Ovary (tissue), 10 donors: ENCODE measurements at regions of chr1 and their contacts with region 1.

Region 1: DNA sequence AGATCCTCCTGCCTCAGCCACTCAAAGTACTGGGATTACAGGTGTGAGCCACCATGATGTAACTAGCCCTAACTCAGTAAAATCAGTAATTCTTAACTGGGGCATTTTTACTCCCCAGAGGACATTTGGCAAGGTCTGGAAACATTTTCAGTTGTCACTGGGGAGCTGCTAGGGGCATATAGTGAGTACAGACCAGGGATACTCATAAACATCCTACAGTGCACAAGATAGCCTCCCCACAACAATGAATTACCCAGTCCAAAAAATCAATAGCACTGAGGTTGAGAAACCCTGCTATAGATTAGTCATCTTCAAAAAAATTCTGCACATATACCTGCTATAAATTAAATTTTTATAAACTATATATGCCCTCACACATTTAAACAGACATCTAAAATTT is 13.0 kb downstream of the TM2D1 start:
- DNase-seq: no peak
- H3K4me3 ChIP-seq: no peak overlapping the region
- H3K27ac ChIP-seq: no peak overlapping the region
- H3K4me1 ChIP-seq: no peaks in the 10 kb centered on the region
- H3K27me3 ChIP-seq: no peaks in the 10 kb centered on the region
- CTCF ChIP-seq: no peak
- EP300 ChIP-seq: no peak
- POLR2A ChIP-seq: no peak

Region 2: DNA sequence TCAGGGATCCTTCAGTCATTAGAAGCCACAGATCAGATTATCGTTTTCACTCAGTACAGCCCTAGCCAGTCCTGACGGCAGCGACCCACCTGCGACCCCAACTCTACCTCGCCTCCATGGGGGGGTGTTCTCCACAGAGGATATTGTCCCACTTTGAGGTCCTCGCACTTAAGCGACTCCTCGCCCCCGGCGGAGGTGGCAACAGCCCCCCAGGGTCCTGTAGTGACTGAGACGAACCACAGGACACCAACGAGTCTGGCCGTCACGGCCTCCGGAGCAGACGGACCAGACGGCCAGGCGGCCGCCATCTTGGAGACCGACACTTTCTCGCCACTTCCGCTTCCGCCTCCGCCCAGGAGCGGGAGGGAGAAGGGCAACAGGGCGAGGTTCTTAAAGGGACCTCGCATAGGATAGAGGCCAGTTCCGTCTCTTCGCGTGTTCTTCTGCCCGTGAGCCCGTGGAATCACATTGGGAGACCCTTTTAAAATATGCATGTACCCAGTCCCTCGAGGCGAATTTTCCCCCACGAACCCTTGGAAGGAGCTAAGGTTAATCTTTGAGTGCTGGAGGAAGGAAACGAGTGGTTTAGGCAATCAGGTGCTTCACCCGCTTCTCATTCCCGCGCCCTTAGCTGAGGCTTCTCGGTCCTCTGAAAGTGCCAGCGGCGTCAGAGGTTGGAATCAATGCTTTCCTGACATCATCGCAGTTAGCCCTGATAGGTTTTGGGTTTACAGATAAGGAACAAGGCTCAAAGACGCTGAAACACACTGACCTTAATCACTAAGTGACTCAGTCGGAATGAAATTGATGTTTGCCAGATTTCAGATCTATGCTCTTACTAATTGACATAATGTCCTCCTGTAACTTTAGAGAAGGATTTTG is 13.1 kb after region 1 on chr1 and contains the start of gene TM2D1:
- intact Hi-C with region 1: loop called in 1 of 4 experiments (anchors 2 kb)
- DNase-seq: peak; percentile 84 to 90 (median 86)
- H3K4me3 ChIP-seq: peak within 1 kb of the TSS; percentile 78
- H3K27ac ChIP-seq: peak within 1 kb of the TSS; percentile 74 to 90
- H3K4me1 ChIP-seq: no peaks in the 10 kb centered on the region
- H3K27me3 ChIP-seq: no peaks in the 10 kb centered on the region
- CTCF ChIP-seq: peak in 1 of 3 donors; percentile 13
- EP300 ChIP-seq: no peak
- POLR2A ChIP-seq: peak; percentile 84
- total RNA-seq, gene TM2D1: 34.6 to 62.4 (median 42.4) TPM